WTC11 (cell line): ENCODE measurements at regions of chr20 and their contacts with region 1.

Region 1: DNA sequence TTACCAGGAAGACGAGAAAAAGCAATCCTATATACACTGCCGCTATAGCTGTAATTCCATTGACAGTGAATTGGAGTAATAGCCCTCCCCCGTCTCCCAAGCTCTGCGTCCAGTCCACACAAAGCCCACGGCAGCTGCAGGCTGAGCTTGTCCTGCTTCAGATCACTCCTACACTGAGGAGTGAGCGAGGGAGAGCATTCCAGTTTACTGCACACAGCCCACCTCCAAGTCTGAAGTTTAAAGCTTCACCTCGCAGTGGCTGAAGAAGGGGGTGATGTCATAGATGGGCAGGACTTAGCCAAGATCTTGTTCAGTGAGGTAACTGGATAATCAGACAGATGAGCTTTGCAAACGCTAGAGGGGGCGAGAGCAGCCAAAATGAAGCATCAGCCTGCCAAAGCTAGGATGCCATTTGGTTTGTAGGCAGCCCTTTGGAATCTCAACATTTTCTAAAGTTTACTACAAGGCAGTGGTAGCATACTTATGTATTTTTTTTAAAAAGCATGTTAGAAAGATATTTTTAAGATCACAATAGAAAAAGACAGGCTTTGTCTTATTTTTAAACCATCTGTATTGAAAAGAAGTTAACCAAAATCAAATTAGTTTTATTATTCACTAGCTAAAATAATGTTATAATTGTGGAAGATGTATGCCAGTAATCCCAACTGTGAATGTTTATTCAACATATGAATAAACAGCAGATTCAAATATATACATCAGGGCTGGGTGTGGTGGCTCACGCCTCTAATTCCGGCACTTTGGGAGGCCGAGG is at the start of gene FLRT3:
- DNase-seq: peak; percentile 75
- ATAC-seq: peak; percentile 98
- H3K4me3 Mint-ChIP-seq: peak within 1 kb of the TSS; percentile 68
- H3K27ac Mint-ChIP-seq: 0 out of 2 replicates have a peak within 1 kb of the TSS, but pooled peaks have one; percentile 49
- H3K4me1 Mint-ChIP-seq: peaks cover 33% of the 10 kb centered on the region
- H3K27me3 Mint-ChIP-seq: peaks cover 10% of the 10 kb centered on the region
- CTCF ChIP-seq: peak; percentile 53
- total RNA-seq, gene FLRT3: 0.50 to 1.0 TPM (median 0.79 TPM) in 3 replicates

Region 2: DNA sequence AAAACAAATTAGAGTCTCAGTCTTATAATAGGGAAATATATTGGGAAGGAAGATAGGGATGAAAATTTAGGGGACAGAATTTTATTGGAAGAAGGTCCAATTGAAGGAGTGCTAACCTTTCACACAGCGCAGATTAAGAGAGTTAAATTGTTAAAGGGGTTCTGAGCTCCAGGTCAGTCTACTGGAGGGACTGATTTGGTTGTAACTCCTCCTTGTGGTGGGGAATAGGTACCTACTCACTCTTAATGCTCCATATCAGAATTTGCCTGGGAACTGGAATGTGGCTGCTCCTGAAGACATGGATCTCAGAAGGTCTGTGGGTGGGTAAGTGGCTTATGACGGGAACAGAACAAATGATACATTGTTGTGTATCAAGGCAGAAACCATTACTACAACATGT is 143.7 kb before region 1 on chr20:
- CTCF ChIA-PET with region 1: interaction called, 10 read pairs
- POLR2A ChIA-PET with region 1: no interaction called
- DNase-seq: no peak
- ATAC-seq: peak; percentile 93
- H3K4me3 Mint-ChIP-seq: no peak overlapping the region
- H3K27ac Mint-ChIP-seq: no peak overlapping the region
- H3K4me1 Mint-ChIP-seq: peaks cover 6% of the 10 kb centered on the region
- H3K27me3 Mint-ChIP-seq: no peaks in the 10 kb centered on the region
- CTCF ChIP-seq: peak; percentile 25; the same call in 1 of the 2 replicates

Region 3: DNA sequence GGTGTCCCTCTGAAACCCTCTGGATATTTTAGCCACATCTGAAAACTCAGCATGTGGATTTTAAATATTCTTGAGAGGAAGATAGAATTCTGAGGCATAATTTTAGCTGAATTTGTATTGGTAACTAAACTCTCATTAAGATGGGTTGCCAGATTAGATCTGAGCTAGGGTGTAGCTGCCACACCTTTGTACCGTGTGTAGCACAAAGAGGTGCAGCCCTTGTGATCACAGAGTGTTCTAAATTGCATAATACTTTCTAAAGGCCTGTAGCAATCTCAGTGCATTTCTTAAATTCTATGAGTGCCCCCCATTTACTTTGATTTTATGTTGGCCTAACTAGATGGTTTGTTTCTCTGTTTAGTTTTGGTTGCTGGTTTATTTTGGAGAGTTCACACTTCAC is 53.1 kb before region 1 on chr20:
- CTCF ChIA-PET with region 1: no interaction called
- POLR2A ChIA-PET with region 1: no interaction called
- DNase-seq: no peak
- ATAC-seq: no peak
- H3K4me3 Mint-ChIP-seq: no peak overlapping the region
- H3K27ac Mint-ChIP-seq: no peak overlapping the region
- H3K4me1 Mint-ChIP-seq: no peaks in the 10 kb centered on the region
- H3K27me3 Mint-ChIP-seq: no peaks in the 10 kb centered on the region
- CTCF ChIP-seq: no peak

Region 4: GRCh38 chr20:14375416-14375985 is 37.9 kb after region 1 on chr20:
- CTCF ChIA-PET with region 1: interaction called, 15 read pairs
- POLR2A ChIA-PET with region 1: no interaction called
- DNase-seq: no peak
- ATAC-seq: no peak
- H3K4me3 Mint-ChIP-seq: no peak overlapping the region
- H3K27ac Mint-ChIP-seq: 0 out of 2 replicates have a peak overlapping the region, but pooled peaks have one; percentile 29
- H3K4me1 Mint-ChIP-seq: peaks cover 37% of the 10 kb centered on the region
- H3K27me3 Mint-ChIP-seq: no peaks in the 10 kb centered on the region
- CTCF ChIP-seq: no peak

Region 5: DNA sequence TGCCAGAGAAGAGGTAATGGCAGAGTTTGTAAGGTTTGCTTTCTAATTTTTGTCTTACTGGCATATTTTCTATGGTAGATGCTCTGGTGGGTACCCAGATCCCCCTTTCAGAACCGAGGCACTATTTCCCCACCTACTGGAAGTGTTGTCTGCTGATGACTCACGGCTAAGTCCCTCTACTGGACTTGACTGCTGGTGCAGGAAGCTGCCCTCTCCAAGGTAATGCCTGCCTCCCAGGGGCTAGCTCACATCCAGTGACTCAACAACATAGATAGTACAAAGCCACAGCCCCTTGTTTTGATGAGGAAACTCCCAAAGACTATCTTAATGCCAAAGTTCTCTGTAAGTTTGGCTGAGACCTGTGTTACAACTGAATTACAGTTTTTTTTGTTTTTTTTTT is 285.2 kb after region 1 on chr20:
- CTCF ChIA-PET with region 1: interaction called, 25 read pairs
- POLR2A ChIA-PET with region 1: no interaction called
- DNase-seq: peak; percentile 27
- ATAC-seq: peak; percentile 97
- H3K4me3 Mint-ChIP-seq: no peak overlapping the region
- H3K27ac Mint-ChIP-seq: no peak overlapping the region
- H3K4me1 Mint-ChIP-seq: peaks cover 8% of the 10 kb centered on the region
- H3K27me3 Mint-ChIP-seq: no peaks in the 10 kb centered on the region; the same call in 1 of the 2 replicates
- CTCF ChIP-seq: no peak

Region 6: DNA sequence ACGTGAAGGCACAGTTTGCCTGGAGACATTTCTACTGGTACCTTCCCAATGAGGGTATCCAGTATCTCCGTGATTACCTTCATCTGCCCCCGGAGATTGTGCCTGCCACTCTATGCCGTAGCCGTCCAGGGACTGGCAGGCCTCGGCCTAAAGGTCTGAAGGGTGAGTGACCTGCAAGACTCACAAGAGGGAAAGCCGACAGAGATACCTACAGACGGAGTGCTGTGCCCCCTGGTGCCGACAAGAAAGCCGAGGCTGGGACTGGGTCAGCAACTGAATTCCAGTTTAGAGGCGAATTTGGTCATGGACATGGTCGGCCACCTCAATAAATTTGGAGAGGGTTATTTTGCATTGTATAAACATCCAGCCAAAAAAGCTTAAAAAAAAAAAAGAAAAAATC is 420.1 kb after region 1 on chr20:
- CTCF ChIA-PET with region 1: interaction called, 13 read pairs
- POLR2A ChIA-PET with region 1: no interaction called
- DNase-seq: peak; percentile 47
- ATAC-seq: no peak
- H3K4me3 Mint-ChIP-seq: no peak overlapping the region
- H3K27ac Mint-ChIP-seq: no peak overlapping the region
- H3K4me1 Mint-ChIP-seq: peaks cover 17% of the 10 kb centered on the region
- H3K27me3 Mint-ChIP-seq: no peaks in the 10 kb centered on the region
- CTCF ChIP-seq: no peak